ENCODE measurements at regions of chr7 and their contacts with region 1.

Region 1: DNA sequence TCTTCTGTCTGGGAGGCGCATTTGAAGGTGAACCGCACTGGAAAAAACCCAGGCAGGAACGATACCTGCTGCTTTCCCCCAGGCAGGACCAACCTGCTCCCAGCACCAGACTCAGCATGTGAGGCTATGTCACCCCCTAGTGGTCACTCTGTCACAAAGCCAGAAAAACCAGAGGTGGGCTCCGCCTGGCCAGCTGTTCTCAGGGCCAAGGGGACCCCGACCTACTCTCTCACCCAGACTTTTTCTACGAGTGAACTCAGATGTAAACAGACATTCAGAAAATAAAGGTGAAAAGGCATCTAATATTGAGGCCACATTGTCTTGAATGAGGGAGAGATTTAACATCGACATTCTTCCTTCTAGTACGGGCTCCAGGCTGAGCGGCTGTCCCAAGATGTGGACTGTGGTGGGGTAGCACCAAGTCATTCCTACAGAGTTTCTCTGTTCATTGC is 117.3 kb downstream of the PRKAG2 start:
- DNase-seq: peak in 1 of 2 donors; percentile 60
- ATAC-seq: peak; percentile 27 to 65 (median 51)
- H3K4me3 ChIP-seq: no peak overlapping the region
- H3K27ac ChIP-seq: no peak overlapping the region
- H3K4me1 ChIP-seq: peaks cover 9 to 37% (median 22%) of the 10 kb centered on the region in 9 donors
- H3K27me3 ChIP-seq: no peaks in the 10 kb centered on the region
- CTCF ChIP-seq: peak; percentile 76 to 95 (median 88)

Region 2: GRCh38 chr7:151368136-151368571 is 391.5 kb before region 1 on chr7:
- intact Hi-C with region 1: loop called in 8 of 10 experiments (anchors 2 to 5 kb)
- DNase-seq: peak; percentile 78 to 85
- ATAC-seq: peak; percentile 93 to 97 (median 96)
- H3K4me3 ChIP-seq: no peak overlapping the region
- H3K27ac ChIP-seq: no peak overlapping the region
- H3K4me1 ChIP-seq: peaks cover 0 to 15% (median 0%) of the 10 kb centered on the region in 9 donors
- H3K27me3 ChIP-seq: no peaks in the 10 kb centered on the region
- CTCF ChIP-seq: peak; percentile 85 to 98 (median 96)

Region 3: GRCh38 chr7:151448261-151449252 is 311.1 kb before region 1 on chr7:
- intact Hi-C with region 1: loop called in 4 of 10 experiments (anchors 5 to 10 kb)
- DNase-seq: peak; percentile 67 to 69
- ATAC-seq: peak; percentile 82 to 94 (median 90)
- H3K4me3 ChIP-seq: peak overlapping the region; percentile 43 to 73 (median 58)
- H3K27ac ChIP-seq: peak overlapping the region in 6 of 10 donors; percentile 7 to 61 (median 26)
- H3K4me1 ChIP-seq: peaks cover 0 to 13% (median 4%) of the 10 kb centered on the region in 9 donors
- H3K27me3 ChIP-seq: no peaks in the 10 kb centered on the region
- CTCF ChIP-seq: peak; percentile 69 to 88 (median 85)

Region 4: DNA sequence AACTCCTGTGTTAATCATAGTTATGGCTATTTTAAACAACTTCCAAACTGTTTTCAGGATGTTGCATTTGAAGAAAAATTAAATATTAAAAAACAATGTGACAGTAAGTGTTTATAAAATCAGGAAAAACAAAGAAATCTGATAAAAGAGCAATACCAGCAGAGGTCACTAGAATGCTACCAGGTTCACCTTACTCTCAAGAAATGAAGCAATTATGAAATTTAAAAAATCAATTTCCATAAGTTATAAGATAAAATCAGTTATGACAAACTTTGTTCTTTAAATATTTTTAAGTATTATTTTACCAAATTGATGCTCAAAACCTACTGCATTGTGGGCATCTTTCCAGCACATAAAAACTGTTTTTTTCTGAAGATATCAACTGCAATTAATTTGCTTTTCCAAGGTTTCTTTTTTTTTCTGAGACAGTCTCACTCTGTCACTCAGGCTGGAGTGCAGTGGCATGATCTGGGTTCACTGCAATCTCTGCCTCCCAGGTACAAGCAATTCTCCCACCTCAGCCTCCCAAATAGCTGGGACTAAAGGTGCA is 189.2 kb before region 1 on chr7:
- intact Hi-C with region 1: loop called in 9 of 10 experiments (anchors 2 to 10 kb)
- DNase-seq: no peak
- ATAC-seq: no peak
- H3K4me3 ChIP-seq: no peak overlapping the region
- H3K27ac ChIP-seq: no peak overlapping the region
- H3K4me1 ChIP-seq: peaks cover 0 to 11% (median 9%) of the 10 kb centered on the region in 9 donors
- H3K27me3 ChIP-seq: no peaks in the 10 kb centered on the region
- CTCF ChIP-seq: peak in 8 of 9 donors; percentile 8 to 66 (median 54)

Region 5: GRCh38 chr7:151838861-151839391 is 79.3 kb after region 1 on chr7:
- intact Hi-C with region 1: no loop called
- DNase-seq: peak in 1 of 2 donors; percentile 47
- ATAC-seq: peak in 7 of 8 donors; percentile 46 to 68 (median 61)
- H3K4me3 ChIP-seq: peak overlapping the region in 1 of 10 donors; percentile 17
- H3K27ac ChIP-seq: peak overlapping the region in 1 of 10 donors; percentile 79
- H3K4me1 ChIP-seq: peaks cover 0 to 40% (median 0%) of the 10 kb centered on the region in 9 donors
- H3K27me3 ChIP-seq: no peaks in the 10 kb centered on the region
- CTCF ChIP-seq: no peak

Region 6: GRCh38 chr7:152370297-152370696 is 610.7 kb after region 1 on chr7:
- intact Hi-C with region 1: no loop called
- DNase-seq: no peak
- ATAC-seq: no peak
- H3K4me3 ChIP-seq: no peak overlapping the region
- H3K27ac ChIP-seq: no peak overlapping the region
- H3K4me1 ChIP-seq: peaks cover 0 to 59% (median 32%) of the 10 kb centered on the region in 9 donors
- H3K27me3 ChIP-seq: no peaks in the 10 kb centered on the region
- CTCF ChIP-seq: no peak